ENCODE measurements at regions of chr15 and their contacts with region 1.

Region 1: GRCh38 chr15:71800835-71801745 is 9.3 kb upstream of the NR2E3 start:
- H3K4me3 ChIP-seq: no peak overlapping the region
- H3K27ac ChIP-seq: no peak overlapping the region
- H3K4me1 ChIP-seq: peaks cover 6% of the 10 kb centered on the region
- CTCF ChIP-seq: peak; percentile 84

Region 2: GRCh38 chr15:71443538-71443937 is 357.6 kb before region 1 on chr15:
- CTCF ChIA-PET with region 1: interaction called, 16 read pairs
- POLR2A ChIA-PET with region 1: no interaction called
- H3K4me3 ChIP-seq: no peak overlapping the region
- H3K27ac ChIP-seq: no peak overlapping the region
- H3K4me1 ChIP-seq: peaks cover 13% of the 10 kb centered on the region
- CTCF ChIP-seq: no peak

Region 3: DNA sequence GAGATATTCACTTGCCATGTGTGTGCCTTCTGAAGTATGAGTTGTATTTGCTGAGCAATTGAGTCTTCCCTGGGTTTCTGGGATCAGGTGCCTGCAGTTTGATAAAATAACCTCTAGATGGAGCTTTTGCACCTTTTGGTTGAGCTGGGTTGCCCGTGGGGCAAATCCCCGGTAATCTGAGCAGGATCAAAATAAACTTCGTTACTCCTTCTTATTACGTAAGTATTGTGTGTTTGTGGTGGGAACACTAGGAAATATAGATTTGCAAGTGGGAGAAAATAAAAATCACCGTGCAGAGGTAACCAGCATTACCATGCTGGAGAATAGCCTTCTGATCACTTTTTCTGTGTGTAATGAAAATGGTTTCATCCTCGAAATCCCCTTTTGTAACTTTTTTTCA is 268.1 kb before region 1 on chr15:
- CTCF ChIA-PET with region 1: interaction called, 25 read pairs
- POLR2A ChIA-PET with region 1: no interaction called
- H3K4me3 ChIP-seq: no peak overlapping the region
- H3K27ac ChIP-seq: no peak overlapping the region
- H3K4me1 ChIP-seq: no peaks in the 10 kb centered on the region
- CTCF ChIP-seq: peak; percentile 61

Region 4: GRCh38 chr15:71562251-71562650 is 238.8 kb before region 1 on chr15:
- CTCF ChIA-PET with region 1: no interaction called
- POLR2A ChIA-PET with region 1: no interaction called
- H3K4me3 ChIP-seq: no peak overlapping the region
- H3K27ac ChIP-seq: no peak overlapping the region
- H3K4me1 ChIP-seq: peaks cover 6% of the 10 kb centered on the region; the same call in 1 of the 2 replicates
- CTCF ChIP-seq: no peak

Region 5: DNA sequence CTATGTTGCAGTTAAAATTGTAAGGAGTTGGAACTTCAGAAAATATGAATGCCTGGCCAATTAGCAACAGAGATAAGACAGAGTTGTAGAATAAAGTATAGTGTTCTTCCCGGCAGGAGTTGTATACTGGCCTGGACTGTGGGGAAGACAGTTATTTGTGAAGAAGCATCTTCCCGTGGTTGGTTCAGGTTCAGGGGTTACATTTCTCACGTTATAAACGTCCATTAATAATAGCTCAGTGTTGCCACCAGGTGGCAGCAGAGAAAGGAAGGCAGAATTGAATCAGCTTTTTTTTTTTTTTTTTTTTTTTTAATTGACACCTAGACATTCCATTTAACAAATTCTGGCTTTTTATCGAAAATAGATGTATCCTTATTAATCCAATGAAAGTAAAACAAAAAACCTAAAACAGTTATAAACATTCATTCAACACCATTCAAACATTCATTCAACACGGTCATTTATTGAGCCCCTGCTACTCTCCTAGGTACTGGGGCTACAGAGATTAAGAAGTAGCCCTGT is 57.2 kb before region 1 on chr15:
- CTCF ChIA-PET with region 1: interaction called, 67 read pairs
- POLR2A ChIA-PET with region 1: interaction called, 3 read pairs
- H3K4me3 ChIP-seq: no peak overlapping the region
- H3K27ac ChIP-seq: no peak overlapping the region
- H3K4me1 ChIP-seq: peaks cover 22% of the 10 kb centered on the region
- CTCF ChIP-seq: peak; percentile 70; the same call in 1 of the 2 replicates

Region 6: DNA sequence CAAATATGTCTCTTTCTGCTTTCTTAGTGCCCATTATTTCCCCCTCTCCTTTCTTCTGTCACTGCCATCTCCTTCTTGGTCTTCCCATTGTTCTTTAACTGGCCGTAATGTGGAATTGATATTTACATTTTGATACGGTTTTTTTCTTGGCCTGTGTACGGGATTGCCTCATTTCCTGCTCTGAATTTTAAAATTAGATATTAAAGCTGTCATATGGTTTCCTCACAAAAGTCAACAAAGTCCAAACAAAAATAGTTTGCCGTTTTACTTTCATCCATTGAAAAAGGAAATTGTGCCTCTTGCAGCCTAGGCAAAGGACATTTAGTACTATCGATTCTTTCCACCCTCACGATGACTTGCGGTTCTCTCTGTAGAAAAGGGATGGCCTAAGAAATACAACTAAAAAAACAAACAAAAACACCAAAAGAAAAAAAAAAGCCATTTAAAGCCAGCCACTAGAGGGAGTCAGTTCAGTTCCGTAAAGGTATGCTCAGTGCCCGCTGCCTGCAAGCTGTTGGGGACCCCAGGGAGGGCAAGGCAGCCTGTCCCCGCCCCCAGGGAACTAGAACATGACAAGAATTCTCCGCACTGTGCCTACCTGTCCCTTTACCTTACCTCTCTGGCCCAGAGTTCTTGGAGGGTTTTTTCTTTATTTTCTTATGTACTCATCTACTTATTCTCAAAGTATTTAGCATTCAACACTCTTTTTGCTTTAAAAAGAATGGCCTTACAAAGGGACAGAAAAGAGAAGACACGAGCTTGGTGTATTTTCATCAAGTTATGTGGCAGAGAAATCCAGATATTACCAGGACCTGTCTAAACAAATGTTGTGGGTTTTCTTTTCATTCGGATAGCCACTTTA is 20.7 kb before region 1 on chr15:
- CTCF ChIA-PET with region 1: interaction called, 70 read pairs
- POLR2A ChIA-PET with region 1: no interaction called
- H3K4me3 ChIP-seq: no peak overlapping the region
- H3K27ac ChIP-seq: no peak overlapping the region
- H3K4me1 ChIP-seq: peaks cover 3% of the 10 kb centered on the region; the same call in 1 of the 2 replicates
- CTCF ChIP-seq: peak; percentile 91

Region 7: GRCh38 chr15:72155635-72156616 is 354.8 kb after region 1 on chr15:
- CTCF ChIA-PET with region 1: interaction called, 47 read pairs
- POLR2A ChIA-PET with region 1: no interaction called
- H3K4me3 ChIP-seq: peak overlapping the region; percentile 9
- H3K27ac ChIP-seq: peak overlapping the region; percentile 25; the same call in 1 of the 2 replicates
- H3K4me1 ChIP-seq: peaks cover 13% of the 10 kb centered on the region
- CTCF ChIP-seq: peak; percentile 98

Measured in HEK293 (cell line).